Activated CD8-positive, alpha-beta T cell treated with anti-CD3 and anti-CD28 coated beads, Interleukin-2, amount 10 ng/mL, durations not matched to agents 7 days and 5 days (primary cell): ENCODE measurements at regions of chr17 and their contacts with region 1.

Region 1: DNA sequence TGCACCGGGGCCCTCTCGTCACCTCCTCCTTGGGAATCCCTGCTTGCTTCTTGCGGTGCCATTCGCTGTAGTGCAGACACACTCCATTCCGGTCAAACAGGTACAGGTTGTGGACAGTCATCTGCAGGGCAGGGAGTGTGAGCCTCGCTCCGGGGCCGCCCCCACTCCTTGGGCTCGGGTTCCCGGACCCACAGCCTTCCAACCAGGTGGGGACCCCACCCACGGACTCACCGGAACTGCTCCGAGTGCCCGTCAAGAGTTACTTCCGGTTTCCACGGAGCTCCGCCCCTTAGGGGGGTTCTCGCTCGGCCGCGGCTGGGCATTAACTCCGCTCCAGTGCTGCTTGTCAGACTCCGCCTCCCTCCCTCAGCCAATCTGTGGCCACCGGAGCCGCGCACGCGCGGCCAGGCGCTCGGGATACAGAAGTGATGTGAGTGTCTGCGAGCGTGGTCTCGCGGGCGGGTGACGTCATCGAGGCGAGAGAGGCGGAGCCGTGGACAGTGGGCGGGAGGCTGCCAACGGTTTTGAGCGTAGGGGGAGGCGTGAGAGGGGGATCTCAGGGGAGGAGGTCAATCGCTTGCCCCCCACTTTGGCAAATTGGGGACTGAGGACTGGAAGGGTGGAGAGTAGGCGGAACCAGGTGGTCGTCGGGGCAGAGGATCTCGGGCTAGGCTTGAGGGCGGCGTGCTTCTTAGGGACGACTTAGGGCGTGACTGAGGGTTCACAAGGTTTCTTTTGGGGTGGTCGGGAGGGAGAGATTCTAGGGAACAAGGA is at the starts of genes CNTROB and TRAPPC1:
- DNase-seq: peak; percentile 100
- ATAC-seq: peak; percentile 98
- H3K4me3 Mint-ChIP-seq: peak within 1 kb of the TSS; percentile 95
- H3K27ac Mint-ChIP-seq: peak within 1 kb of the TSS; percentile 98
- H3K4me1 Mint-ChIP-seq: peaks cover 49% of the 10 kb centered on the region
- H3K27me3 Mint-ChIP-seq: no peaks in the 10 kb centered on the region
- total RNA-seq, gene CNTROB: 66.7 to 76.5 TPM
- total RNA-seq, gene TRAPPC1: 248 to 278 TPM

Region 2: GRCh38 chr17:7856883-7857723 is 74.8 kb before region 1 on chr17 and contains the start of gene NAA38:
- CTCF ChIA-PET with region 1: interaction called, 5 read pairs
- POLR2A ChIA-PET with region 1: interaction called, 10 read pairs
- DNase-seq: peak; percentile 98
- ATAC-seq: peak; percentile 89
- H3K4me3 Mint-ChIP-seq: no peak within 1 kb of the TSS
- H3K27ac Mint-ChIP-seq: no peak within 1 kb of the TSS
- H3K4me1 Mint-ChIP-seq: peaks cover 3% of the 10 kb centered on the region
- H3K27me3 Mint-ChIP-seq: no peaks in the 10 kb centered on the region
- total RNA-seq, gene NAA38: 92.7 to 93.1 TPM

Region 3: GRCh38 chr17:7915611-7916382 is 16.1 kb before region 1 on chr17 and contains the start of gene RNF227:
- CTCF ChIA-PET with region 1: interaction called, 41 read pairs
- POLR2A ChIA-PET with region 1: interaction called, 44 read pairs
- DNase-seq: peak; percentile 89
- ATAC-seq: peak; percentile 85
- H3K4me3 Mint-ChIP-seq: peak within 1 kb of the TSS; percentile 85
- H3K27ac Mint-ChIP-seq: peak within 1 kb of the TSS; percentile 95
- H3K4me1 Mint-ChIP-seq: peaks cover 35% of the 10 kb centered on the region
- H3K27me3 Mint-ChIP-seq: no peaks in the 10 kb centered on the region
- total RNA-seq, gene RNF227: 4.2 TPM

Region 4: GRCh38 chr17:7944326-7944725 is 12.4 kb after region 1 on chr17:
- CTCF ChIA-PET with region 1: interaction called, 20 read pairs
- POLR2A ChIA-PET with region 1: interaction called, 33 read pairs
- DNase-seq: no peak
- ATAC-seq: no peak
- H3K4me3 Mint-ChIP-seq: no peak overlapping the region
- H3K27ac Mint-ChIP-seq: peak overlapping the region; percentile 46
- H3K4me1 Mint-ChIP-seq: peaks cover 2% of the 10 kb centered on the region
- H3K27me3 Mint-ChIP-seq: no peaks in the 10 kb centered on the region

Region 5: GRCh38 chr17:7951143-7951803 is 19.4 kb after region 1 on chr17:
- CTCF ChIA-PET with region 1: interaction called, 20 read pairs
- POLR2A ChIA-PET with region 1: interaction called, 33 read pairs
- DNase-seq: peak; percentile 73
- ATAC-seq: peak; percentile 98
- H3K4me3 Mint-ChIP-seq: peak overlapping the region; percentile 66
- H3K27ac Mint-ChIP-seq: peak overlapping the region; percentile 94
- H3K4me1 Mint-ChIP-seq: peaks cover 40% of the 10 kb centered on the region
- H3K27me3 Mint-ChIP-seq: no peaks in the 10 kb centered on the region

Region 6: DNA sequence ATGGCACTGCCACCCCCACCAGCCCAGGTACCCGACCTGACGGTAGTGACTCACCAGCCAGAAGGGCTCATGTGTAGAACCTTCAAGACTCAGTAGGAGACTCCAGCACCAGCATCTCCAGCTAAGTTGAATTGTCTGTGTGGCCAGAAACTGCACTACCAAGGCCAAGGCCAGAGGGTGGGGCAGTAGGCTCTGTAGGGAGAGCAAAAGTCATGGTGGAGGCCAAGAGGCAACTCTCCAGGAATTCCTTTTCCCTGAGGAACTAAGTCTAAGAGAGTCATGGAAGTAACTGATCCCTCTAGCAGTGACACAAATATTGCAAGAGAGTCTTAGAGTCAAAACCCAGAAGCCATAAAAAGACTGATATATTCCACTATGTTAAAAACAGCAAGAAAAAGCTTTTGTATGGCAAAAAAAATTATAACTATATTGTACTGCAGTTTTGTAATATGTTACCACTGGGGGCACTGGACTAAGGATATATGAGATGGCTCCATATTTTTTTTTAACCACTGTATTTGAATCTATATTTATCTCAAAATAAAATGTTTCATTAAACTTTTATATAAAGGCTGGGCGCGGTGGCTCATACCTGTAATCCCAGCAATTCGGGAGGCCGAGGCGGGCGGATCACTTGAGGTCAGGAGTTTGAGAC is 40.4 kb after region 1 on chr17:
- CTCF ChIA-PET with region 1: interaction called, 19 read pairs
- POLR2A ChIA-PET with region 1: no interaction called
- DNase-seq: no peak
- ATAC-seq: no peak
- H3K4me3 Mint-ChIP-seq: no peak overlapping the region
- H3K27ac Mint-ChIP-seq: no peak overlapping the region
- H3K4me1 Mint-ChIP-seq: no peaks in the 10 kb centered on the region
- H3K27me3 Mint-ChIP-seq: peaks cover 17% of the 10 kb centered on the region